Activated naive CD4-positive, alpha-beta T cell treated with anti-CD3 and anti-CD28 coated beads, Interleukin-2, amount 10 ng/mL, durations not matched to agents 7 days and 5 days (primary cell): ENCODE measurements at regions of chr3 and their contacts with region 1.

Region 1: DNA sequence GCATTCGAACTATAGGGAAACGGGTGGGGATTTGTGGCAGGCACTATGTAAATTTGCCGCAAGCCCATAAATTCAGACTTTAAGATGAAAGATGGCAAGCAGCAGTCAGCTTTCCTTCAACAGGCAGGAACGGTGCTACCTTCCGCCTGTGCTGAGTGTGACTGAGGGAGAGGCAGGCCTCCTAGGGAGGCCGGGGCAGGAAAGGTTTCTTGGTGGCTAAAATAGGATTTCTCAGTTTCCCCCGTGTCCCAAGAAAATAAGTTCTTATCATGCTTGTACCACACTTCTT is 12.5 kb downstream of the FLNB start:
- DNase-seq: no peak
- H3K4me3 Mint-ChIP-seq: no peak overlapping the region
- H3K27ac Mint-ChIP-seq: no peak overlapping the region
- H3K4me1 Mint-ChIP-seq: peaks cover 35% of the 10 kb centered on the region
- H3K27me3 Mint-ChIP-seq: peaks cover 7% of the 10 kb centered on the region

Region 2: DNA sequence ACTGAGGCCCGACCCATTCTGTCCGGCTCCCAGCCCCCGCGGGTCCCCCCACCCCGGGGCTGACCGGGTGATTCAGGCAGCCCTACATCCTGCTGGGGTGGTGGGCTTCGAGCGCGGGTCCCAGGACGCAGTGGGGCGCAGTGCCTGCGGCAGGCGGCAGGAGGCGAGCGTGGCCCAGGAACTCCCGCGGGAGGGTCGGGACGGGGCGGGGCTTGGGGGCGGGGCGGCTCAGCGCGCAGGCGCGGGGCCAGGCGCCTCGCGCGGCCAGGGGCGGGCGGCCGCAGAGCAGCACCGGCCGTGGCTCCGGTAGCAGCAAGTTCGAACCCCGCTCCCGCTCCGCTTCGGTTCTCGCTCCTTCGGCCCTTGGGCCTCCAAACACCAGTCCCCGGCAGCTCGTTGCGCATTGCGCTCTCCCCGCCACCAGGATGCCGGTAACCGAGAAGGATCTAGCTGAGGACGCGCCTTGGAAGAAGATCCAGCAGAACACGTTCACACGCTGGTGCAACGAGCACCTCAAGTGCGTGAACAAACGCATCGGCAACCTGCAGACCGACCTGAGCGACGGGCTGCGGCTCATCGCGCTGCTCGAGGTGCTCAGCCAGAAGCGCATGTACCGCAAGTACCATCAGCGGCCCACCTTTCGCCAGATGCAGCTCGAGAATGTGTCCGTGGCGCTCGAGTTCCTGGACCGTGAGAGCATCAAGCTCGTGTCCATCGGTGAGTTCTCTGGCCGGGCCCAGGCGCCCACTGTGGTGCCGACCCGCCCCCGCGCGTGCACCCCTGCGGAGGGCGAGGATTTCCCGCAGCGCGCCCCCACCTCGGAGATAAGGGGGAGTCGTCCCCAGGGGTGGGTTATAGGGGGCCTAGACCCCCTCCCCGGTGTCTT is 12.3 kb before region 1 on chr3 and contains the start of gene FLNB:
- CTCF ChIA-PET with region 1: interaction called, 14 read pairs
- DNase-seq: peak; percentile 81
- H3K4me3 Mint-ChIP-seq: peak within 1 kb of the TSS; percentile 82
- H3K27ac Mint-ChIP-seq: peak within 1 kb of the TSS; percentile 81
- H3K4me1 Mint-ChIP-seq: peaks cover 42% of the 10 kb centered on the region
- H3K27me3 Mint-ChIP-seq: no peaks in the 10 kb centered on the region

Region 3: GRCh38 chr3:58101499-58102389 is 81.0 kb after region 1 on chr3:
- CTCF ChIA-PET with region 1: no interaction called
- DNase-seq: no peak
- H3K4me3 Mint-ChIP-seq: no peak overlapping the region
- H3K27ac Mint-ChIP-seq: no peak overlapping the region
- H3K4me1 Mint-ChIP-seq: no peaks in the 10 kb centered on the region
- H3K27me3 Mint-ChIP-seq: no peaks in the 10 kb centered on the region